CD14-positive monocyte (primary cell): ENCODE measurements at regions of chr11 and their contacts with region 1.

Region 1: GRCh38 chr11:59142530-59143507 is at the start of gene FAM111A:
- DNase-seq: peak; percentile 82 to 88 (median 87)
- H3K4me3 ChIP-seq: peak within 1 kb of the TSS; percentile 80 to 99 (median 83)
- H3K4me3 Mint-ChIP-seq: peak within 1 kb of the TSS; percentile 97 to 100
- H3K27ac ChIP-seq: peak within 1 kb of the TSS; percentile 93 to 99
- H3K27ac Mint-ChIP-seq: peak within 1 kb of the TSS; percentile 95 to 98 (median 97)
- H3K4me1 ChIP-seq: peaks cover 43 to 56% of the 10 kb centered on the region in 2 donors
- H3K4me1 Mint-ChIP-seq: peaks cover 57% of the 10 kb centered on the region
- H3K27me3 ChIP-seq: no peaks in the 10 kb centered on the region
- H3K27me3 Mint-ChIP-seq: no peaks in the 10 kb centered on the region
- CTCF ChIP-seq: no peak
- polyA plus RNA-seq, gene FAM111A: 34.6 to 101 (median 55.7) TPM

Region 2: DNA sequence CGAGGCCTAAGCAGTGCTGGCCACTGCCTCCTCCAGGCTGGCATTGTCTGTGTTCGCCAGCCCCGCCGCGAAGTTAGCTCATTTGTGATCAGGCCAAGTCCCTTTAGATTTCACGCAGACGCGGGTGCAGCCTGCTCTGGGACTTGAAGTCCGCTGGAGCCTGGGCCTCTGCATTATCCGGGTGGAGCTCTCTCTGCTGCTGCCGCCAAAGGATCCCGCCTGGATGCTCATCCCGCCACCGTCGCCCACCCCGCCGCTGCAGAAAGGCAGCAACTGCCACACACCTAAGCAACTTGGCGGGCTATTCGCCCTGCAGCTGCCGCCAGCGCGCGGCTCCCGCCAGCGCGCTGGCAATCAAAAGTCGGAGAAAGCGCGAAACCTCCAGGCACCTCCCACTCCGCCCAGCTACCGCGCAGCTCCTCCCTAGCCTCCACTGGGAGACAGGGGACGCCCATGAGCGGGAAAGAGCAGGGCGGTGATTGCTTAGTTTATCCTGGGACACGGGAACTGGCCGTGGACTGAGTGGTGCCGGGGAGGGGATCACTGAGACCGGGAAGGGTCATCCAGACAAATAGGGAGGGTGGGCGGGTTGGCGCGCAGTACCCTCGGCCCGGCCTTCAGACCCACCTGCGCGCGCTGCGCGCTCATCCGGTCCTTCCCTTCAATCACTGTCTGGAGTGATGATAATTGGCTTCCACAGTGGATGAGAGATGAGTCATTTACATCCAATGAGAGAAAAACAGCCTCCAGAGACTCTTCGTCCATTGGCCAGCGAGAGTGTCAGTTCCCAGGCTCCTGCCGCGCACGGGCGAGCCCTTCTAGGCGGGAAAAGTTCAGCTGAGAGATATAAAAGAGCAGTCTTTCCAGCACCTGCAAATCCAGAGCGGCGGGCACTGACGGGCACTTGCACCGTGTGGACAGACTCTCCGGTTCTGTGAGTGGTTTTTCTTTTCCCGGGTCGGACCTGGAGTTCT is 36.2 kb before region 1 on chr11 and contains the start of gene FAM111B:
- intact Hi-C with region 1: loop called (anchors 5 kb)
- DNase-seq: peak; percentile 48 to 73 (median 73)
- H3K4me3 ChIP-seq: peak within 1 kb of the TSS; percentile 26 to 71 (median 58)
- H3K4me3 Mint-ChIP-seq: peak within 1 kb of the TSS; percentile 79 to 90
- H3K27ac ChIP-seq: no peak within 1 kb of the TSS
- H3K27ac Mint-ChIP-seq: peak within 1 kb of the TSS in 4 of 7 donors; percentile 23 to 55 (median 42)
- H3K4me1 ChIP-seq: peaks cover 30 to 37% of the 10 kb centered on the region in 2 donors
- H3K4me1 Mint-ChIP-seq: peaks cover 58% of the 10 kb centered on the region
- H3K27me3 ChIP-seq: no peaks in the 10 kb centered on the region
- H3K27me3 Mint-ChIP-seq: peaks cover 5 to 7% (median 6%) of the 10 kb centered on the region in 3 donors
- CTCF ChIP-seq: no peak
- polyA plus RNA-seq, gene FAM111B: 0.09 TPM in 1 of 3 donors, not detected in the others

Region 3: GRCh38 chr11:59611570-59612565 is 469.0 kb after region 1 on chr11:
- intact Hi-C with region 1: no loop called
- DNase-seq: no peak
- H3K4me3 ChIP-seq: no peak overlapping the region
- H3K4me3 Mint-ChIP-seq: no peak overlapping the region
- H3K27ac ChIP-seq: no peak overlapping the region
- H3K27ac Mint-ChIP-seq: peak overlapping the region in 3 of 7 donors; percentile 21 to 63 (median 25)
- H3K4me1 ChIP-seq: peaks cover 22 to 32% of the 10 kb centered on the region in 2 donors
- H3K4me1 Mint-ChIP-seq: peaks cover 36% of the 10 kb centered on the region
- H3K27me3 ChIP-seq: no peaks in the 10 kb centered on the region
- H3K27me3 Mint-ChIP-seq: peaks cover 0 to 3% (median 2%) of the 10 kb centered on the region in 3 donors
- CTCF ChIP-seq: no peak